Breast epithelium (tissue), 4 donors: ENCODE measurements at regions of chr10 and their contacts with region 1.

Region 1: DNA sequence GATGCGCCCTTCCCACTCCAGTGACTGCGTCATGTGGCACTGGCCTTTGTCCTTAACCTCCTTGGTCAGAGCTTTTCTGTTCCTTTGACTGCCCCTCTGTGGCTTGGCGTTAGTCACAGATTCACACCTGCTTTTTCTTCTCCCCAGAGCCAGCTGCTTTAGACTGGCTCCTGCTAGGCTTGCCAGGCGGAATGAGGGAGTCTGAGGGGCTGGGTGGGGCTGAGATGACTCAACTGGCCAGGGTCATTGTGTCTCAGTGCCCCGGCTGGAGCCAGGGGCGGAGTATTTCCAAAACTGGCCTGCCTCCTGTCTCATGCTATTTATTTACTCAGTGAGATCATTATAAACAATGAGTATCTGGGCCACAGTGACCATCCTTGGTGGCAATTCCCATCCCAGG is 194.1 kb downstream of the EMX2 start:
- DNase-seq: no peak
- H3K4me3 ChIP-seq: no peak overlapping the region
- H3K27ac ChIP-seq: no peak overlapping the region
- H3K4me1 ChIP-seq: no peaks in the 10 kb centered on the region
- H3K27me3 ChIP-seq: peaks cover 0 to 38% of the 10 kb centered on the region in 2 donors
- CTCF ChIP-seq: no peak
- POLR2A ChIP-seq: no peak

Region 2: GRCh38 chr10:117047947-117048346 is 688.7 kb before region 1 on chr10:
- intact Hi-C with region 1: loop called (anchors 5 kb)
- DNase-seq: no peak
- H3K4me3 ChIP-seq: no peak overlapping the region
- H3K27ac ChIP-seq: no peak overlapping the region
- H3K4me1 ChIP-seq: no peaks in the 10 kb centered on the region
- H3K27me3 ChIP-seq: no peaks in the 10 kb centered on the region
- CTCF ChIP-seq: no peak
- POLR2A ChIP-seq: no peak

Region 3: GRCh38 chr10:117710181-117710798 is 26.4 kb before region 1 on chr10:
- intact Hi-C with region 1: loop called (anchors 1 kb)
- DNase-seq: no peak
- H3K4me3 ChIP-seq: no peak overlapping the region
- H3K27ac ChIP-seq: no peak overlapping the region
- H3K4me1 ChIP-seq: no peaks in the 10 kb centered on the region
- H3K27me3 ChIP-seq: peaks cover 0 to 9% of the 10 kb centered on the region in 2 donors
- CTCF ChIP-seq: no peak
- POLR2A ChIP-seq: no peak

Region 4: GRCh38 chr10:117757086-117757720 is 20.5 kb after region 1 on chr10:
- intact Hi-C with region 1: no loop called
- DNase-seq: no peak
- H3K4me3 ChIP-seq: no peak overlapping the region
- H3K27ac ChIP-seq: no peak overlapping the region
- H3K4me1 ChIP-seq: no peaks in the 10 kb centered on the region
- H3K27me3 ChIP-seq: peaks cover 0 to 19% of the 10 kb centered on the region in 2 donors
- CTCF ChIP-seq: no peak
- POLR2A ChIP-seq: no peak